HEK293 (cell line): ENCODE measurements at regions of chr12 and their contacts with region 1.

Region 1: DNA sequence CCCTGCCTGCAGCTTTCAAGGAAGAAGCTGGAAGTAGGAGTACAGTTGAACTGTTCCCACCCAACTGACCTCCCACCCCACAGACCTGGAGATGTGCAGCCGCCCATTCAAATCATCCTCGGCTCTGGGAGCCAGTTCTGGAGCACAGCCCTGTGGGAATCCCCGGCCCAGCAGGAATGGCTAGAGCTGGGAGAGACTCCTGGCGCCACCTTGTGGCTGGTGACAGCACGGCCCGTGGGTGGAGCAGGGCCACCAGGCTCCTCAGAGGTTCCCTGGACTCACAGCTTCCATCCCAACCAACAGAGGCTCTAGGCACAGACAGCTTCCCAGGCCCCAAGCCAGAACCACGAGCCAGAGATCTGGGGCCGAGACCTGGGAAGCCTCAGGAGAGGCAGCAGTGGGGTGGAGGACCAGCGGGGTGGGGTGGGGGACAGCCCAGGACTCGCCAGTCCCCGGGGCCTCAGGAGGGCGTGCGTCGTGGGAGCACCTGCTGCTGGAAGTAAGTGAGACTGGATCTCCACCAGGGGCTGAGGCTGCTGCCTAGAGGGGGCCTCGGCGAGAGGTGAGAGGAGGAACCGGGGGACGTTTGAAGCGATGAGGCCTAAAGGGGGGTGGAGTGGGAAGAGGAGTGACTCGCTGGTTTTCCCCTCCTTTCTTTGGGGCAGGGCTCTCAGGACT is 43.4 kb downstream of the RNF34 start:
- H3K4me3 ChIP-seq: no peak overlapping the region
- H3K27ac ChIP-seq: no peak overlapping the region
- H3K4me1 ChIP-seq: no peaks in the 10 kb centered on the region
- CTCF ChIP-seq: peak; percentile 86

Region 2: DNA sequence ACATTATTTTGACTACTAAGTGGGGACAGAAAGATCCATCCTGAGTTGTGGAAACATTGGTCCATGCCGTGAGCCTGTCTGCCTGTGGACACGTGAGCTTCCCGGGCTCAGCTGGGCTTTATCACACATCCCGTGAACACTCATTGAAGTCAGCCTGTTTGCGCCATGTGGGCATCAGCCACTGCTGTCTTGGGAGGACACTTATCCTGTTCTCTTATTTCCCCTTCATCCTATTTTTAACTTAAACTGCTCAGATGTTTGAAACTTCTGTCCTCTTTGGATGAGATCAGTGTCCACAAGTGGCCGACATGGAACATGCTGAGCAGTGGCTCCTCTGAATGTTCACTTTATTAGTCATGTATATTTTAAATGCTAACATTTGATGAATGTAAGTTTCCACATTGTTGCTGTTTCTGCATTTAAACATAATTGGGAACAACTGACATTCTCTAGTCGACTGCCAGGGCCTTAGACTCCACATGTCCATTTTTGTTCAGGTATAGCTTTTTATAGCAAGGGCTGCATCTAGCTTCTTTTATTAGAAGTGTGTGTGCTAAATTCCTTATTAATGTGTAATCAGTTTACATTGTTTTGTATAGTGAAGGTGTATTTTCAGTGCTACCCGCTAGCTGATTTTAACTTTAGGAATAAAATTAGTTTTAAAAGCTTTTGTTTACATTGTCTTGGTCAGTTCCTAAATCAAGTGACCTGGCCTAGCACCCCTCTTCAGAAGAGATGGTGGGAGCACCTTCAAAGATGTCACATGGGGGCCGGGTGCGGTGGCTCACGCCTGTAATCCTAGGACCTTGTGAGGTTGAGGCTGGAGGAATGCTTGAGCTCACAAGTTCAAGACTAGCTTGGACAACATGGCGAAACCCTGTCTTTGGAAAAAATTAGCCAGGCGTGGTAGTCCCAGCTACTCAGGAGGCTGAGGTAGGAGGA is 19.4 kb before region 1 on chr12:
- CTCF ChIA-PET with region 1: interaction called, 20 read pairs
- POLR2A ChIA-PET with region 1: interaction called, 3 read pairs
- H3K4me3 ChIP-seq: no peak overlapping the region
- H3K27ac ChIP-seq: no peak overlapping the region
- H3K4me1 ChIP-seq: no peaks in the 10 kb centered on the region
- CTCF ChIP-seq: no peak

Region 3: GRCh38 chr12:121432740-121433480 is 10.4 kb before region 1 on chr12:
- CTCF ChIA-PET with region 1: interaction called, 20 read pairs
- POLR2A ChIA-PET with region 1: no interaction called
- H3K4me3 ChIP-seq: no peak overlapping the region
- H3K27ac ChIP-seq: no peak overlapping the region
- H3K4me1 ChIP-seq: no peaks in the 10 kb centered on the region
- CTCF ChIP-seq: no peak

Region 4: GRCh38 chr12:121455766-121456420 is 12.6 kb after region 1 on chr12:
- CTCF ChIA-PET with region 1: interaction called, 13 read pairs
- POLR2A ChIA-PET with region 1: no interaction called
- H3K4me3 ChIP-seq: no peak overlapping the region
- H3K27ac ChIP-seq: no peak overlapping the region
- H3K4me1 ChIP-seq: no peaks in the 10 kb centered on the region
- CTCF ChIP-seq: no peak

Region 5: GRCh38 chr12:121461048-121461447 is 17.7 kb after region 1 on chr12:
- CTCF ChIA-PET with region 1: interaction called, 13 read pairs
- POLR2A ChIA-PET with region 1: interaction called, 3 read pairs
- H3K4me3 ChIP-seq: no peak overlapping the region
- H3K27ac ChIP-seq: no peak overlapping the region
- H3K4me1 ChIP-seq: no peaks in the 10 kb centered on the region
- CTCF ChIP-seq: no peak

Region 6: DNA sequence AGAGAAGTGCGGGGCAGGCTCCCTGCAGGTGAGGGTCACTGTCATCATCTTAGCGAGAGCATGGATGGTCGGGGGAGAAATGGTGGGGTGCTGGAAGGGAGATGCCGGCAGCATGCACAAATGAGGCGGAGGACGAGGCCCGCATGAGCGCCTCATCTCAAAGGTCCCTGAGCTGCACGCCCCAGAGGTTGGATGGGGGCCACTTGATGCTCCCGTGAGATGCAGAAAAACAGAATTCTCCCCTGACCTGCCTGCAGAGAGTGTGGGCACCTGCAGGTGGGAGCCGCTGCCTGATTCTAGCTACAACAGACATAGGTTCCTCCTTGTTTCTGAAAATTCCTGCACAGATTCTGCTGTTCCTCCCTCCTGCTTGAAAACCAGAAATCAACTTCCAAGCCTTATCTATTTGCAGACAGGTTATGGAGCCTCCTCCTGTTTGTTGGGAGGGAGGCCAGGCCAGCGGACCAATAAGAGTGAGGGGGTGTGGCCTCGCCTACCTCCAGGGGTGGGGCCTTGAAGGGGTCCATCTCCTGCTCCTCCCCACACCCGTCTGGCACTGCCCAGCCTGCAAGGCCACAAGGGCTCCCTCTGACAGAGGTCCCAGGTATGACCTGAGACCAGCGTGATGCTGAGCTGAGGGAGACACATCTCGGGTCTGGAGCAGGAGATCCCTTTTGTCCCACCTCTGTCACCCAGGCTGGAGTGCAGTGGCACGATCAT is 70.3 kb after region 1 on chr12:
- CTCF ChIA-PET with region 1: no interaction called
- POLR2A ChIA-PET with region 1: no interaction called
- H3K4me3 ChIP-seq: no peak overlapping the region
- H3K27ac ChIP-seq: no peak overlapping the region
- H3K4me1 ChIP-seq: no peaks in the 10 kb centered on the region
- CTCF ChIP-seq: no peak